SK-N-SH (cell line): ENCODE measurements at regions of chr12 and their contacts with region 1.

Region 1: GRCh38 chr12:32755654-32756475 is at the start of gene YARS2:
- DNase-seq: peak; percentile 90
- H3K4me3 ChIP-seq: peak within 1 kb of the TSS; percentile 87 to 97
- H3K27ac ChIP-seq: peak within 1 kb of the TSS; percentile 82 to 91
- H3K4me1 ChIP-seq: peaks cover 9 to 12% of the 10 kb centered on the region in 2 experiments; a peak in 1 of 4 replicates
- H3K27me3 ChIP-seq: no peaks in the 10 kb centered on the region
- CTCF ChIP-seq: peak; percentile 94
- EP300 ChIP-seq: no peak
- RAD21 ChIP-seq: peak; percentile 98
- polyA plus RNA-seq, gene YARS2: 14.3 and 16.5 TPM in 2 replicates

Region 2: DNA sequence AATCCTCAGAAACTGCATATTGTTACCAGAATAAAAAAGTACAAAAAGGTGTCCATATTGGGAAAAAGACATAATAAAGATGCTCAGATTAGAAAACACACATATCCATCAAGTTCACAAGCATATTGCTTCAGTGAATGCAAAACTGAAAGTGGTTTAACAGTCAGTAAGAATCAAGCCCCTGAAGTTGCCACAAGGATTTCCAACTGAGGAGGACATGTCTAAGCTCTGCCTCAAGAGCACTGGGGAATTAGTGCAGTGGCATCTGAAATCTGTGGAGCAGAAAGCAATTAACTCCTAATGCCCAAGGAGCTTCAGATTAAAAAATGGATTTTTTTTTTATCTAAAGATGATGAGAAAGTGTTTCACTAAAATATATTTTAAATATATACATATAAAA is 1278.2 kb before region 1 on chr12:
- CTCF ChIA-PET with region 1: no interaction called
- POLR2A ChIA-PET with region 1: no interaction called
- DNase-seq: no peak
- H3K4me3 ChIP-seq: no peak overlapping the region
- H3K27ac ChIP-seq: no peak overlapping the region
- H3K4me1 ChIP-seq: no peaks in the 10 kb centered on the region
- H3K27me3 ChIP-seq: no peaks in the 10 kb centered on the region
- CTCF ChIP-seq: no peak
- EP300 ChIP-seq: no peak
- RAD21 ChIP-seq: no peak

Region 3: DNA sequence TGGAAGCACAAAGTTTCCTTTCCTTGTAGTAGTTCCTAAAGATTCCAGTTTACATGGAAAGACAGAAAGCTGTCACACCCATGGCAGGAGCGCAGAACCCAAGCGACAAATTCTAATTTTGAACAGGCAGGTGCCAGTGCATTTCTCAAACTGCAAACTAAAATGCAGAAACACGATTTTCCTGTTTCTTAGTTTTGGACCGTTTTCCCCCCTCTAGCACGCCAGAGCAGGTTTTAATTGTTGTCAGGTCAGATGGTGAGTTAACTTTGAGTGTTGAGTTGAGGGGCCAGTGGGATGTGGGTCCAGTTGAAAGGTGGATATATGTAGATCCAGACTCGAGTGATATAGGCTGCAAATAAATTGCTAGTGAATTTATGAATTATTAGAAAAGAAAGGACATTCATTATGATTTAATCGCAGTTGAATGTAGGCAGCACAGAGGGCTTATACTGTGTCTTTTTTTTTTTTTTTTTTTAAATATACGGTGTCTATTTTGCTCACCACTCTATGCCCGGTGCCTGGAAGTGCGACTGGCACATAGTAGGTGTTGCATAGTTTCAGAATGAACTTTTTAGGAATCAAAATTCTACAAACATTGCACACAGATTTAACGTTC is 1097.3 kb before region 1 on chr12:
- CTCF ChIA-PET with region 1: interaction called, 16 read pairs
- POLR2A ChIA-PET with region 1: interaction called, 5 read pairs
- DNase-seq: peak; percentile 10
- H3K4me3 ChIP-seq: peak overlapping the region; percentile 80 to 95
- H3K27ac ChIP-seq: peak overlapping the region; percentile 94 to 97; a peak in 3 of 4 replicates
- H3K4me1 ChIP-seq: peaks cover 4 to 8% of the 10 kb centered on the region in 2 experiments; a peak in 1 of 4 replicates
- H3K27me3 ChIP-seq: no peaks in the 10 kb centered on the region
- CTCF ChIP-seq: no peak
- EP300 ChIP-seq: no peak
- RAD21 ChIP-seq: no peak

Region 4: GRCh38 chr12:32671930-32672780 is 83.7 kb before region 1 on chr12:
- CTCF ChIA-PET with region 1: interaction called, 28 read pairs
- POLR2A ChIA-PET with region 1: no interaction called
- DNase-seq: peak; percentile 85
- H3K4me3 ChIP-seq: no peak overlapping the region; a peak in 1 of 4 replicates
- H3K27ac ChIP-seq: peak overlapping the region in 1 of 2 experiments; percentile 36; a peak in 2 of 4 replicates
- H3K4me1 ChIP-seq: peaks cover 0 to 6% of the 10 kb centered on the region in 2 experiments; a peak in 2 of 4 replicates
- H3K27me3 ChIP-seq: no peaks in the 10 kb centered on the region
- CTCF ChIP-seq: peak; percentile 73
- EP300 ChIP-seq: peak in 1 of 2 experiments; percentile 23; a peak in 1 of 4 replicates
- RAD21 ChIP-seq: peak; percentile 90

Region 5: DNA sequence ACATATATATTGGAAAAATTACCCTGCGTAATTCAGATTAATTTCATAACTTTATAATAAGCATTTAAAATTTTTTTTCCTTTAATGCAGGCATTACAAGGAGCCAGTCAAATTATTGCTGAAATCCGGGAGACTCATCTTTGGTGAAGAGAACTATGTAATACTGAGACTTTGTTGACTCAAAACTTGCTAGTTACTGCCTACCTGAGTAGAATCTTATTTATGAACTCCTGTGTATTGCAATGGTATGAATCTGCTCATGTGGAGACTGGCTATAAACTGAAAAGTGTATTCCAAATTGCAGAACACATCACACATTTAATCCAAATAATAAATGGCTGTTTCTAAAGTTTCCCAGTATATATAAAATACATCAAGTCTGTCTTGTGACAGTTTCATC is 12.6 kb before region 1 on chr12:
- CTCF ChIA-PET with region 1: interaction called, 26 read pairs
- POLR2A ChIA-PET with region 1: no interaction called
- DNase-seq: no peak
- H3K4me3 ChIP-seq: no peak overlapping the region
- H3K27ac ChIP-seq: no peak overlapping the region
- H3K4me1 ChIP-seq: no peaks in the 10 kb centered on the region; a peak in 1 of 4 replicates
- H3K27me3 ChIP-seq: no peaks in the 10 kb centered on the region
- CTCF ChIP-seq: no peak
- EP300 ChIP-seq: no peak
- RAD21 ChIP-seq: no peak

Region 6: GRCh38 chr12:32821293-32821692 is 65.4 kb after region 1 on chr12:
- CTCF ChIA-PET with region 1: interaction called, 10 read pairs
- POLR2A ChIA-PET with region 1: interaction called, 3 read pairs
- DNase-seq: no peak
- H3K4me3 ChIP-seq: no peak overlapping the region
- H3K27ac ChIP-seq: peak overlapping the region in 1 of 2 experiments; percentile 82; a peak in 2 of 4 replicates
- H3K4me1 ChIP-seq: peaks cover 0 to 10% of the 10 kb centered on the region in 2 experiments; a peak in 2 of 4 replicates
- H3K27me3 ChIP-seq: no peaks in the 10 kb centered on the region
- CTCF ChIP-seq: no peak
- EP300 ChIP-seq: no peak
- RAD21 ChIP-seq: no peak

Region 7: GRCh38 chr12:32896432-32897273 is 140.8 kb after region 1 on chr12 and contains the start of gene PKP2:
- CTCF ChIA-PET with region 1: interaction called, 22 read pairs
- POLR2A ChIA-PET with region 1: interaction called, 4 read pairs
- DNase-seq: peak; percentile 96
- H3K4me3 ChIP-seq: peak within 1 kb of the TSS; percentile 48 to 56
- H3K27ac ChIP-seq: peak within 1 kb of the TSS in 1 of 2 experiments; percentile 50; a peak in 1 of 4 replicates
- H3K4me1 ChIP-seq: peaks cover 0 to 14% of the 10 kb centered on the region in 2 experiments; a peak in 2 of 4 replicates
- H3K27me3 ChIP-seq: peaks cover 14% of the 10 kb centered on the region; the same call in 1 of the 2 replicates
- CTCF ChIP-seq: no peak
- EP300 ChIP-seq: no peak
- RAD21 ChIP-seq: no peak
- polyA plus RNA-seq, gene PKP2: 0.06 and 0.10 TPM in 2 replicates

Region 8: DNA sequence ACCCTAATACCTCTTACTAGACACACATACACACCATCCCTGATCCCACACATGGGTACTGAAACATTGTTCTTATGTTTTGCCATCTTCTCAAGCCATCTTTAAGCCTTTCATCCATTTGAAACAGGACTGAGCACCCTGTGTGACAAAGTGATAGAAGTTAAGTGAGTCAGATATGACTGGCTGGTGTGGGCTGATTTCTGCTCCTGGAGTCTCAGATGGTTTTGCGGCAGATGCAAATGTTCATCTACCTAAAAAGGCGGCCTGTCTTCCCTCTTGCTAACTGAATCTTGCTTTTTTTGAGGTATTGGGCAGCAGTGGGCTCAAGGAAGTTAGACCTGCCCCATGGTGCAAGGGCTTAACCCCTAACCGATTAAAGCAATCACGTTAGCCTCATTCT is 171.1 kb after region 1 on chr12:
- CTCF ChIA-PET with region 1: interaction called, 150 read pairs
- POLR2A ChIA-PET with region 1: no interaction called
- DNase-seq: no peak
- H3K4me3 ChIP-seq: no peak overlapping the region
- H3K27ac ChIP-seq: no peak overlapping the region
- H3K4me1 ChIP-seq: no peaks in the 10 kb centered on the region
- H3K27me3 ChIP-seq: no peaks in the 10 kb centered on the region; the same call in 1 of the 2 replicates
- CTCF ChIP-seq: no peak
- EP300 ChIP-seq: no peak
- RAD21 ChIP-seq: no peak

Region 9: DNA sequence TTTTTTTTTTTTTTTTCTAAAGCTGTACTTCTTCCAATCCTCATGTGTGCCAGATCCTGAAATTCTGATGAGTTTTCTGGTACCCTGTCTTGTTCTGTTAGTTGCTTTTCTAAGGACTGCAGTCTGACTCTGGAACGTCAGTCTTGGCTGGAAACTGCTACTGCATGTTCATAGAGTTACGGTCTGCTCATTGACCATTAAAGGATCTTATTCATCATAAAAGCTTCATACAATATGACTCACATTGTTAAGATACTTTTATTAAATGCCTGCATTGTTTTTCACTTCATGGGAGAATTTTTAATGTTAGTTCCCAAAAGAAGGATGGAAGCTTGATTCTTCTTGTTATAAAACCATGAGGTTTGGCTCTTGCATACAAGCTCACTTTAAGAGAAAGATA is 450.1 kb after region 1 on chr12:
- CTCF ChIA-PET with region 1: no interaction called
- POLR2A ChIA-PET with region 1: no interaction called
- DNase-seq: no peak
- H3K4me3 ChIP-seq: no peak overlapping the region
- H3K27ac ChIP-seq: no peak overlapping the region
- H3K4me1 ChIP-seq: no peaks in the 10 kb centered on the region
- H3K27me3 ChIP-seq: no peaks in the 10 kb centered on the region
- CTCF ChIP-seq: no peak
- EP300 ChIP-seq: no peak
- RAD21 ChIP-seq: no peak